Activated T-helper 1 cell treated with anti-CD3 and anti-CD28 coated beads, Interleukin-12 subunit alpha, Interleukin-12 subunit beta, Interleukin-2, Interleukin-4 antibody, amounts not matched to agents 30 ng/mL and 10 ng/mL and 1 ng/mL, durations not matched to agents 14 hours and 24 hours and 36 hours (primary cell): ENCODE measurements at regions of chr11 and their contacts with region 1.

Region 1: GRCh38 chr11:90947930-90948329 is 725.1 kb upstream of the CHORDC1 start:
- DNase-seq: no peak
- H3K4me3 Mint-ChIP-seq: no peak overlapping the region
- H3K27ac Mint-ChIP-seq: no peak overlapping the region
- H3K4me1 Mint-ChIP-seq: no peaks in the 10 kb centered on the region
- H3K27me3 Mint-ChIP-seq: no peaks in the 10 kb centered on the region

Region 2: GRCh38 chr11:91005458-91005857 is 57.5 kb after region 1 on chr11:
- intact Hi-C with region 1: loop called (anchors 10 kb)
- DNase-seq: no peak
- H3K4me3 Mint-ChIP-seq: no peak overlapping the region
- H3K27ac Mint-ChIP-seq: no peak overlapping the region
- H3K4me1 Mint-ChIP-seq: no peaks in the 10 kb centered on the region
- H3K27me3 Mint-ChIP-seq: no peaks in the 10 kb centered on the region

Region 3: DNA sequence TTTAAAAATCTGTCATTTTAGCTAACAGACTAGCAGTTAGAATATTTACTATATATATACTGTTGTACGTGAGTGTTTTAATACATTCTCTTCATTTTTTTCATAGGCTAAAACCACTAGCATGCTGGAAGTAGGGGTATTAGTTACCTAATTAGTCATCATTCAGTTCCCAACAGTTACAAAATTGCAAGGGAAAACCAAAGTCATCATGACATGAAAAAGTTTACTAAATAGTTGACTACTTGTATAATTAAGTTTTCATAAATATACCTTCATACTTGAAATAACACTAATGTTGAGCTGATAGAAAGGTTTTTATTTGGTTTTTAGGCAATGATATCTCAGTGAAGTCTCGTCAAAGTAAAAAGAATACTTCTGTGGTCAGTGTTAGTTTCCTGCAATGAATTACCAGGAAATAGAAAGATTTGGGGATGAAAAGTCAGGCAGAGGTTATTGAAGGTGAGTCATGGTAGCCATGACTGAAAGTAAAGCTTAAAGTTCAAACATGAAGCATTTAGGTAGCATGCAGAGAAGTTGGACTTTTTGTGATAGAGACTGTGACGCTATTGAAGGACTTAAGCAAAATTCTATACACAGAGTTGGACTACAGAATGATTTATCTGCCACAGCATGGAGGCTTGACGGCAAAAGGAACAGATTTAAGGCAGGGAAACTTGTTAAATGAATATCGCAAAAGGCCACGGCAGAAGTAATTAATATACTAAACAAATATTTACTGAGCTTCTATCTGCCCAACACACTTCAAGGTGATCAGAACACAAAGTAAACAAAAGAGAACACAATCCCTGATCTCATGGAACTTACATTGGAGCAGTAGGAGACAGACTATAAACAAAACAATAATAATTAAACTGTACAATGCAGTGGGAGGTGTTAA is 448.6 kb after region 1 on chr11:
- intact Hi-C with region 1: no loop called
- DNase-seq: no peak
- H3K4me3 Mint-ChIP-seq: no peak overlapping the region
- H3K27ac Mint-ChIP-seq: no peak overlapping the region
- H3K4me1 Mint-ChIP-seq: no peaks in the 10 kb centered on the region
- H3K27me3 Mint-ChIP-seq: no peaks in the 10 kb centered on the region